ENCODE measurements at regions of chr1 and their contacts with region 1.

Region 1: DNA sequence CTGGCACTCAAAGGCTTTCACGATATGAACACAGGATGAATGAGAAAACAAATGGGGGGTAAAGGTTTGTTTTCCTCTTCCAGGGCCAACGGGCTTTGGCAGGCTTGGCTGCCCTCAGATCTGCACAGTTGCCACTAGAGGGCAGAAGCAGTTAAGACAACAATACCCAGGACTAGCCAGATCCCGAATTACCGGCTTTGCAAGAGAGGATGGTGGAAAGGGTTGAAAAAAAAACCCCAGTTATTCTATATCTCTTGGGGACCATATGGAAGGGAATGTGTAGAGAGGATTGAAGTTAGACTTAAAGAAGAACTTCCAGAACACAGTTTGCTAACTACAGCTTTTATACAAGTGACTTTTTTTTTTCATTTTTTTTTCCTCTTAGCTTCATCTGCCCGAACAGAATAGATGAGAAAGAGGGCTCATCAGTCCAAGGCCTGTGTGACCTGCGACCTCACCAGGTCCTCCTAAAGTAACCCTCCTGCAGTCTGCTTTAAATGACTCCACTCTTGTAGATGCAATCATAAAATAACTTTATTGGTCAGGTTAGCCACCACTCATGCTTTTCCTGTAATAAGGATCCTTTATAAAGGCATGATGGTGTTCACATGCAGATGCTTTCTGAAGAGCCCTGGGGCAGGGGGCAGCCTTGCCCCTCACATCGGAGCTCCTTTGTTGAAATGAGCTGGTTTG is 10.7 kb downstream of the FMOD start:
- DNase-seq: peak in 4 of 5 donors; percentile 65 to 79 (median 69)
- ATAC-seq: peak; percentile 73 to 86 (median 83)
- H3K4me3 ChIP-seq: no peak overlapping the region
- H3K27ac ChIP-seq: peak overlapping the region in 1 of 12 donors; percentile 8
- H3K4me1 ChIP-seq: peaks cover 0 to 36% (median 10%) of the 10 kb centered on the region in 12 donors
- H3K27me3 ChIP-seq: peaks cover 0 to 16% (median 0%) of the 10 kb centered on the region in 9 donors
- CTCF ChIP-seq: peak in 11 of 12 donors; percentile 73 to 94 (median 90)
- POLR2A ChIP-seq: no peak

Region 2: GRCh38 chr1:203017692-203018091 is 322.6 kb before region 1 on chr1:
- intact Hi-C with region 1: no loop called
- DNase-seq: no peak
- ATAC-seq: no peak
- H3K4me3 ChIP-seq: no peak overlapping the region
- H3K27ac ChIP-seq: no peak overlapping the region
- H3K4me1 ChIP-seq: no peaks in the 10 kb centered on the region
- H3K27me3 ChIP-seq: no peaks in the 10 kb centered on the region
- CTCF ChIP-seq: no peak
- POLR2A ChIP-seq: no peak

Region 3: DNA sequence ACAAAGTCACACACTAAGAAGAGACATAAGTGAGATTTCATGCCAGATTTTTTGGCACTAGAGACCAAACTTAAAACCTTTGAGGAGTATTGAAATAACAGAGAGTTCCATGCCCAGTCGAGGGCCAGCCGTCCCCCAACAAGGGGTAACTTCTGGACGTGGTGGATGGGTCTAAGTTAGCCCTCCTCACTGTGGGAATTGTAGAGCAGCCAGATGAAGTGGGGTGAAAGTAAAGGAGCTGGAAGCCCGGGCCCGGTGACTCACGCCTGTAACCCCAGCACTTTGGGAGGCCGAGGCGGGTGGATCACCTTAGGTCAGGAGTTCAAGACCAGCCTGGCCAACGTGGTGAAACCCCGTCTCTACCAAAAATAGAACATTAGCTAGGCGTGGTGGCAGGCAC is 223.2 kb before region 1 on chr1:
- intact Hi-C with region 1: no loop called
- DNase-seq: no peak
- ATAC-seq: no peak
- H3K4me3 ChIP-seq: no peak overlapping the region
- H3K27ac ChIP-seq: no peak overlapping the region
- H3K4me1 ChIP-seq: peaks cover 0 to 11% (median 3%) of the 10 kb centered on the region in 12 donors
- H3K27me3 ChIP-seq: peaks cover 0 to 50% (median 12%) of the 10 kb centered on the region in 9 donors
- CTCF ChIP-seq: no peak
- POLR2A ChIP-seq: no peak

Region 4: GRCh38 chr1:203127666-203128430 is 212.4 kb before region 1 on chr1 and contains the start of gene ADORA1:
- intact Hi-C with region 1: no loop called
- DNase-seq: peak; percentile 67 to 85 (median 71)
- ATAC-seq: peak; percentile 73 to 88 (median 86)
- H3K4me3 ChIP-seq: peak within 1 kb of the TSS; percentile 22 to 54 (median 44)
- H3K27ac ChIP-seq: peak within 1 kb of the TSS; percentile 16 to 90 (median 83)
- H3K4me1 ChIP-seq: peaks cover 0 to 65% (median 40%) of the 10 kb centered on the region in 12 donors
- H3K27me3 ChIP-seq: peaks cover 0 to 55% (median 0%) of the 10 kb centered on the region in 9 donors
- CTCF ChIP-seq: peak in 3 of 12 donors; percentile 12 to 22 (median 16)
- POLR2A ChIP-seq: no peak
- total RNA-seq, gene ADORA1: 0.81 to 16.2 (median 9.5) TPM

Region 5: DNA sequence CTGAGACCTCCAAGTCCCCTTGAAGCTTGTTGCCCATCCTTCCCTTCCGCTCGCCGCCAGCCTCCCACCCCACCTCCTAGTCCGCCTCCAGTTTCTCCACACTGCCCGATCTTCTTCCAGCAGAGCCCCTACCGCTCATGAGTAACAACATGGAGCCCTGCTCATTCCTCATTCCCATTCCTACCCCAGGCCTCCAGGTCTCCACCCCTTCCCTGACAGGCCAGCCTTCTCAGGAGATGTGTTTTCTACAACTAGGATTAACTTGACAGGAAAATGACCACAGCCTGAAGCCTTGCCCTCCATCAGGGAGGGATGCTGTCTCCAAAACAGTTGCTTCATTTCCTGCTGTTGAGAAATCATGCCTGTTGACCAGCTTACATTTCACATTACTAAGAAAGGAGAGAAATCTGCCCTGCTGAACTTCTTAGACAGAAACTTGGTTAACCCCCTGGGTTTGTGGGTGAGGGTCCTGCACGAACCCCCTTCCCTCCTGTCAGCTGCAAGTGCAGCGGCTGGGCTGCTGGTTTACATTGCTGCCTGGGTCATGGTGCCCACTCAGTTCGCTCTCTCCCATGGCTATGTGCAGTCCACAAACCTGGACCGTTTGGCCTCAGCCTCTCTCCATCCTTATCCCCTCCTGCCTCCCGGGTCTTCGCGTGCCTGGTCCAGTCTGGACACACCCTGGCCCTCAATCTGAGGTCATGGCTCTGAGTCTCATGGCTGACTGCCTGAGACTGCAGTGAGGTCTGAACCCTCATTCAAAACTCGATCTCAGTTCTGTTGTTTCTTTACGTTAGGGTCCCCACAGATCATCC is 137.6 kb before region 1 on chr1:
- intact Hi-C with region 1: no loop called
- DNase-seq: peak in 4 of 5 donors; percentile 25 to 75 (median 60)
- ATAC-seq: peak; percentile 62 to 85 (median 80)
- H3K4me3 ChIP-seq: no peak overlapping the region
- H3K27ac ChIP-seq: peak overlapping the region in 10 of 12 donors; percentile 33 to 77 (median 58)
- H3K4me1 ChIP-seq: peaks cover 0 to 36% (median 5%) of the 10 kb centered on the region in 12 donors
- H3K27me3 ChIP-seq: no peaks in the 10 kb centered on the region
- CTCF ChIP-seq: no peak
- POLR2A ChIP-seq: no peak

Region 6: DNA sequence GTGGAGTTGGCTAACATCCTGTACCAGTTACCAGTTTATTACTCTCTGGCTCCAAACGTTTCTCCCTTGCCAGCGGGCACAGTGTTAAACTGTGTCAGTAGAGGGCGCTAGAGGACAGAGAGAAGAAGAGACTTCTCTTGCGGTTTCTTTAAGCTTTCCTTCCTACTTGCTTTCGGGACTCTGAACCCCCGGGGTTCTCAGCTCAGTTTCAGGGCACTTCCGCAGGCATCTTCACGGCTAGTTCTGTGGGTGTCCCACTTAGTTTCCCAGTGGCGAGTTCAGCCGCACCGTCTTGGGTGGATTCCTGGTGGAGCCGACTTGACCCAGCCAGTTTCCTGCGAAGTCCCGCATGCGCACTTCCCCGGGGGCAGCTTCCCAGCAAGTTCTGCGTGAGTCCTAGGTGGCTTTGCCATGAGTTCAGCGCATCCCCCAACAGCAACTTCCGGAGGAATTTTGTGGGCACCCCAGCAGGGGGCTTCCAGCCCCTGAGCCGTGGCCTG is 72.9 kb before region 1 on chr1:
- intact Hi-C with region 1: loop called in 5 of 10 experiments (anchors 2 kb)
- DNase-seq: peak; percentile 81 to 89 (median 84)
- ATAC-seq: peak; percentile 47 to 74 (median 72)
- H3K4me3 ChIP-seq: peak overlapping the region; percentile 37 to 69 (median 60)
- H3K27ac ChIP-seq: peak overlapping the region; percentile 63 to 92 (median 87)
- H3K4me1 ChIP-seq: peaks cover 0 to 27% (median 8%) of the 10 kb centered on the region in 12 donors
- H3K27me3 ChIP-seq: no peaks in the 10 kb centered on the region
- CTCF ChIP-seq: peak; percentile 85 to 97 (median 95)
- POLR2A ChIP-seq: no peak

Region 7: GRCh38 chr1:203440771-203441170 is 100.5 kb after region 1 on chr1:
- intact Hi-C with region 1: loop called (anchors 1 to 2 kb)
- DNase-seq: peak; percentile 70 to 85 (median 78)
- ATAC-seq: peak; percentile 92 to 97 (median 94)
- H3K4me3 ChIP-seq: no peak overlapping the region
- H3K27ac ChIP-seq: peak overlapping the region in 6 of 12 donors; percentile 1 to 77 (median 52)
- H3K4me1 ChIP-seq: peaks cover 0 to 45% (median 13%) of the 10 kb centered on the region in 12 donors
- H3K27me3 ChIP-seq: no peaks in the 10 kb centered on the region
- CTCF ChIP-seq: peak; percentile 40 to 76 (median 64)
- POLR2A ChIP-seq: no peak

Region 8: GRCh38 chr1:203486618-203487370 is 146.5 kb after region 1 on chr1:
- intact Hi-C with region 1: loop called (anchors 1 to 5 kb)
- DNase-seq: peak in 1 of 5 donors; percentile 38
- ATAC-seq: peak in 3 of 4 donors; percentile 3 to 34 (median 23)
- H3K4me3 ChIP-seq: peak overlapping the region in 11 of 12 donors; percentile 10 to 54 (median 45)
- H3K27ac ChIP-seq: peak overlapping the region; percentile 55 to 90 (median 84)
- H3K4me1 ChIP-seq: peaks cover 0 to 46% (median 16%) of the 10 kb centered on the region in 12 donors
- H3K27me3 ChIP-seq: no peaks in the 10 kb centered on the region
- CTCF ChIP-seq: no peak
- POLR2A ChIP-seq: no peak

Region 9: GRCh38 chr1:203564024-203564423 is 223.8 kb after region 1 on chr1:
- intact Hi-C with region 1: loop called in 1 of 10 experiments (anchors 5 kb)
- DNase-seq: no peak
- ATAC-seq: no peak
- H3K4me3 ChIP-seq: no peak overlapping the region
- H3K27ac ChIP-seq: no peak overlapping the region
- H3K4me1 ChIP-seq: peaks cover 0 to 12% (median 3%) of the 10 kb centered on the region in 12 donors
- H3K27me3 ChIP-seq: no peaks in the 10 kb centered on the region
- CTCF ChIP-seq: no peak
- POLR2A ChIP-seq: no peak

Region 10: GRCh38 chr1:203702130-203702577 is 361.9 kb after region 1 on chr1:
- intact Hi-C with region 1: loop called in 4 of 10 experiments (anchors 10 kb)
- DNase-seq: peak in 1 of 5 donors; percentile 40
- ATAC-seq: peak; percentile 36 to 68 (median 62)
- H3K4me3 ChIP-seq: no peak overlapping the region
- H3K27ac ChIP-seq: peak overlapping the region in 1 of 12 donors; percentile 89
- H3K4me1 ChIP-seq: peaks cover 0 to 16% (median 8%) of the 10 kb centered on the region in 12 donors
- H3K27me3 ChIP-seq: no peaks in the 10 kb centered on the region
- CTCF ChIP-seq: peak; percentile 59 to 85 (median 78)
- POLR2A ChIP-seq: no peak